ENCODE measurements at regions of chr3 and their contacts with region 1.

Region 1: DNA sequence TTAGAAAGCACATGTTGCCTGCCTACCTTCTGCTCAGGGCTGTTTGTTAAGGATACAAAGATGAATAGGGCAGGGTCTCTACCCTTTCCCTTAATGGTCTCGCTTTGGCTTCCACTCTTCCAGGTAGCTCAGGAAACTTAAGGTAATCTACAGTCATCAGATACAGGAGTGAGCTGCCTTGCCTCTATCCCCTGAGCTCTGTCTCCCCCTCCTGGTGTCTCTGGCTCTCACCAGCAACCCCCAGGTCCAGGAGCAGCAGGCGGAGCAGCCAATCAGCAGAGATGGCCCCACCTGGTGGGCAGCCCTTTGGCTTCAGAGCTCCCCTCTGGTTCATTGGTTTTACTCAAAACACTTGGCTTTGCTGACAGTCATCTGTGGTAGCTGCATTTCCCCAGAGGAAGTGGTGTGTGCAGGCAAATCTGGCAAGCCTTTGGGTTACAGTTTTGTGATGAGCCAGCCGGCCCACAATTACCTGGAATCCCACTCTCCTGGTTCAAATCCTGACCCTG is 8.5 kb upstream of the CX3CR1 start:
- DNase-seq: peak; percentile 61 to 93 (median 82)

Region 2: DNA sequence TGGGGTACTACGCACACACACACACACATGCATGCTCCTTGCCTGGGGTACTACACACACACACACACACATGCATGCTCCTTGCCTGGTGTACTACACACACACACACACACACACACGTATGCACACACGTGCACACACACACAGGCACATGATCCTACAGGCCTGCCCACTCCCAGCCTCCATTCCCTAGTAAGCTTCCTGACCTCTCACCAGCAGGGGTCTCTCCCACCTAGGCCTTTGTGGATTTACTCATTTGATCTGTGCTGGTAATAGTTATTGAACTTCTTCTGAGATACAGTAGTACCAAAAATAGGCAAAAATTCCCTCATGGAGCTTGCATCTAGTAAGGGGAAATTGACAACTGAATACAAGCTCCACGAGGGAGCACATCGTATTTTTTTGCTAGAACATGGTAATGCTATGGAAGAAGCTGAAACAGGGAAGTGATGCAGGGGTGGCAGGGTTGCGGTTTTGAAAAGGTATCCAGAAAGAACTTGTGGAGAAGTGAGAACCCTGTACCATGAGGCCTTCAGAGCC is 161.8 kb before region 1 on chr3:
- intact Hi-C with region 1: loop called (anchors 10 kb)
- DNase-seq: peak in 15 of 42 donors; percentile 41 to 80 (median 56)

Region 3: DNA sequence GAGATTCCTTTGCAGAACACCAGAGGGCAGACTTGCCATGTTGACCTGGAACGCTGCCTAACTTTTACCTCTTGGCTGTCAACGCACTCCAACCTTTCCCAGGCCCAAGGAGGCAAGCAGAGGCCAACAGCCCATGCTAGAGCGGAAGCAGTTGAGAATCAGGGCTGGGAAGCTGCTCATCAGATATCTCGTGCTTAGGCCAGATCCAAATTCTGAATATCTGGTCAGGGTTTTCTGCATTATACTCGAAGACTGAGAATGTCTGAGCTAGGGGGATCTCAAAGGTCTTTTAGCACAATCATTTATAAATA is 98.4 kb before region 1 on chr3:
- intact Hi-C with region 1: loop called (anchors 5 kb)
- DNase-seq: peak in 41 of 42 donors; percentile 22 to 84 (median 63)

Region 4: DNA sequence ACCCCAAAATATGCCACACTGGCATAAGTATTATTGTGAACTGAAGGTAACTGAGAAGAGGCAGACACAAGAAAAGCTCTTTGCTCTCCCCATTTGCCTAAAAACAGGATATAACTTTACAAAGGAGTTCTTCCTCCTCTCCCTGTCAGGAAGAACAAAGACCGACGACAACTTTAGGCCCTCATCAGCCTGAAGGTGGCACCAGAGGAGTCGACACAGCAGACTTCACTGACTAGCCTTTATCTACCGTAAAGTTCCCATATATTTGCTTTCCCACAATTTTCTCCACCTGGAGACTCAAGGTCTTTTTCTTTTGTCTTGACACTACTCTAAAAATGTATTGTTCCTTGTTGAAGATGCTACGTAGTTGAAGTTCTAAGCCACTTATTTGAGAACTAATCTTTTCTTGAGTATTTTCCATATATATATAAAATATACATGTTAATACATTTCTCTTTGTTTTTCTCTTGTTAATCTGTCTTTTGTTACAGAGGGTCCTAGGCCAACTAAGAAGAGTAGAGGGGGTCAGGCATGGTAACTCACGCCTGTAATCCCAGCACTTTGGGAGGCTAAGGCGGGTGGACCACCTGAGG is 79.8 kb before region 1 on chr3:
- intact Hi-C with region 1: loop called (anchors 5 kb)
- DNase-seq: peak; percentile 28 to 86 (median 67)

Region 5: DNA sequence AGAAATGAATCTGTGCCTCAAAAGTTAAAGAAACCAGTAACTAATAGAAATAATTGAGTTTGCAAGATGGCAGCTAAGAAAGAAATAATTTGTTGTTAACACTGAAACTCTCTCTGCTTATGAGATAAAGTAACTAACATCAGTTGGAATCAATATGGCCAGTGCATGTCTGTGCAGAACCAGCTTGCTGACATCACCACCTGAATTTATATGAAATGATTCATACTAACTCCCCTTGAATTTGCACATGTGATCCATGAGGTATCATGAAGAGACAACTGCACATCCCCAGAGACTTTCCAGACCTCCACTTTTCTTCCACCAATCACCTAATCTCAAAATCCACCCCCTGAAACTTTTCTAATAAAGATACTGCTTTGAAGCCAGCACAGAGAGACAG is 84.5 kb after region 1 on chr3:
- intact Hi-C with region 1: no loop called
- DNase-seq: no peak

Measured in head of caudate nucleus (tissue), 42 donors.